Activated B cell treated with CpG ODN at 0.5 μM for 24 hours (primary cell): ENCODE measurements at regions of chr7 and their contacts with region 1.

Region 1: DNA sequence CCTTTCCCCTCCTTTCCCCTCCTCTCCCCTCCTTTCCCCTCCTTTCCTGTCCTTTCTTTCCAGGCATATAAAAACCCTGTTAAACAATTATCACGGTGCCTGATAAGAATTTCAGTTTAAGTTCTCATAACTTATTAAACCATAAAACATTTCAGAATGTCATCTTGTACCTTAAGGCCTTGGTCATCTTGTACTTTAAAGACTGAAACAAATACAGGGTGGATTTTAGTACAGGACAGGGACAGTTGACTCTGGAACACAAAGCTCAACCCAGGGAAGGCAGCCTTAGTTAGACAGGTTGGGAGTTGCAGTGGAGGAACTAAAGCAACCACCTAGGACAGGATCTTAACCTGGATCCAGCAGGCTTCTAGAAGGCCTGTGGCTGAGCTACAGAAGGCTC is 1.2 kb downstream of the AGR3 start:
- DNase-seq: no peak
- ATAC-seq: no peak
- H3K4me3 Mint-ChIP-seq: no peak overlapping the region
- H3K27ac Mint-ChIP-seq: no peak overlapping the region
- H3K4me1 Mint-ChIP-seq: peaks cover 2% of the 10 kb centered on the region
- H3K27me3 Mint-ChIP-seq: no peaks in the 10 kb centered on the region
- CTCF ChIP-seq: no peak

Region 2: DNA sequence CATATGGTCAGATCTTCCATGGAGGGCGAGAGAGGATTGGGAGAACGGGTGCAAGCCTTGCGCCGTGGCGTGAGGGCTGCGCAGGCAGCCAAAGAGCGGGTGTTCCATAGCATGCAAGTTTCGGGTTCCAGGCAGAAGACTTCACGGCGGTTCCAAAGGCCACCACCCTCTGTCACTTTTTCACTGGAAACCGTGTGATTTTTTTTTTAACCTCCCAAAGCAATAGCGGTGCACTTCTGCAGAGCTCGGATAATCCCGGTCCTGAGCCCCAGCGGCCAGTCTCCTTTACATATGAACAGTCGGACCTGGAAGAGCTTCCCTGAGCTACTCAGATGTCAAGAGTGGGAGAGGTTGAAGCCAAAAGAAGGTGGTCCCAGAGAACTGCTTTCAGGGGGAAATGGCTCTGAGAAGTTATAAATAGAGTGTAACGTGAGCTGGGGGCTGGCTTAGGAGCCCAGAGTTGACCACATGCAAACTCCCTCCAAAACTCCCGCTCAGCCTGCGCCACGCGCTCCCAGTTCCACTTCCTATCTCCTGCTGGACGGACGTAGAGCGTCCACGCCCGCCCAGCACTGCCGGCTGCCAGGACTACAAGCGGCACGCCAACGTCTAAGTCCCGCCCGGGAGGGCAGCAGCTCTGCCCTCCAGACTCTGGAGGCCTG is 1194.1 kb before region 1 on chr7 and contains the start of gene MEOX2:
- CTCF ChIA-PET with region 1: no interaction called
- POLR2A ChIA-PET with region 1: no interaction called
- intact Hi-C with region 1: no loop called
- DNase-seq: no peak
- ATAC-seq: no peak
- H3K4me3 Mint-ChIP-seq: no peak within 1 kb of the TSS
- H3K27ac Mint-ChIP-seq: no peak within 1 kb of the TSS
- H3K4me1 Mint-ChIP-seq: no peaks in the 10 kb centered on the region
- H3K27me3 Mint-ChIP-seq: peaks cover 30% of the 10 kb centered on the region
- CTCF ChIP-seq: no peak
- total RNA-seq, gene MEOX2: not detected in 2 replicates

Region 3: DNA sequence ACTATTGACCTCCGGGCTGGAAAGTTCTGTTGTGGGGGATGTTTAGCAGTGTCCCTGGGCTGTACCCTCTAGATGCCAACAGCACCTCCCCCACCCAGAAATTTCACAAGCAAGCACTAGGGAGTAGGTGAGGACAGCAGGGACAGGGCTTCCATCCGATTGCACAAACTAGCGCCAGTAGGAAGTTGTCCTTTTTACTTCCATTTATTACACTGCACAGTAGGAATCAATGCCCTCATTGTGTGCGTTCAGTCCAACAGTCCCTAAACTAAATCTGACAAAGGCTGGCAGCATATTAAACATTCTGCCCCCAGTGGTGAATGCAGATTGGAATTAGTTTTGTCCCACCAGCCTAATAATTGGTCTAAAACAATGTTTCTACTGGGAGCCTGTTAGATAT is 408.6 kb before region 1 on chr7:
- CTCF ChIA-PET with region 1: no interaction called
- POLR2A ChIA-PET with region 1: no interaction called
- intact Hi-C with region 1: no loop called
- DNase-seq: no peak
- ATAC-seq: no peak
- H3K4me3 Mint-ChIP-seq: no peak overlapping the region
- H3K27ac Mint-ChIP-seq: no peak overlapping the region
- H3K4me1 Mint-ChIP-seq: no peaks in the 10 kb centered on the region
- H3K27me3 Mint-ChIP-seq: peaks cover 9% of the 10 kb centered on the region
- CTCF ChIP-seq: no peak

Region 4: DNA sequence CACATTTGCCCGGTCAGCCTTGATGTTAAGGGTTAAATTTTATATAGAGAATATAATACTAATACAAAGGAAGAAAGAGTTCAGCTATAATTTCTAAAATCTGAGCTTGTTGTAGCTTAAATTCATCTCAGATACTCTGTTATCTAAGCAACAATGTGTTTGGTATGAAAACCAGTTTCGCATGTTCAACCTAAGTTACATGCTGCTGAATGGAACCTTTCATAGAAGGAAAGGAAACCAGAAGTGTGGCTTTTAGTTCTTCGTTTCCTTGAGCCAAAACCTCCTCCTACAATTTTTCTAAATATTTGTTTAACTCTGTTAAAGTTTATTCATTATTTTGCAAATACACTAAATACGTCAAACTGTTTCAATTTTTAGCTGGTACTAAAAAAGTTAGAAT is 94.3 kb before region 1 on chr7:
- CTCF ChIA-PET with region 1: no interaction called
- POLR2A ChIA-PET with region 1: interaction called, 17 read pairs
- intact Hi-C with region 1: no loop called
- DNase-seq: no peak
- ATAC-seq: no peak
- H3K4me3 Mint-ChIP-seq: no peak overlapping the region
- H3K27ac Mint-ChIP-seq: no peak overlapping the region
- H3K4me1 Mint-ChIP-seq: peaks cover 5% of the 10 kb centered on the region
- H3K27me3 Mint-ChIP-seq: no peaks in the 10 kb centered on the region
- CTCF ChIP-seq: no peak

Region 5: DNA sequence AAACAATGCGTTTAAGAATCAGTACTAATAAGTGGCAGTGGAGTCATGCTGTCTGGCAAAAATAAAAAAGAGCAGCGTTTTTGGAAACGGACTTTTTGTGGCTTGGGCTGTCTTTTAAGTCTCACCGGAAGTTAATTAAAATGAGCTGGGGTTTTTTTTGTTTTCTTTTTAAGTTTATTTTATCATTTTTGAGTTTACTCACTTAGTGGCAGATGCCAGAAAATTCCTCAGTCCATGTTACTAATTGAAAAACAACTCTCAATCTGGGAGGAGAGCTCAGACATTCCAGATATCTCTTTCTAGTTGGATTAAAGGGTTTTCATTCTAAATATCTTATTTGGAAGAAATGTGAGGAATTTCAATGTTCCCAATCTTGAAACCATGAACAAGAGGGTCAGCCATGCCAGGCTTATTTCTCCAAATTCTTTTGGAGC is 135.1 kb after region 1 on chr7:
- CTCF ChIA-PET with region 1: no interaction called
- POLR2A ChIA-PET with region 1: no interaction called
- intact Hi-C with region 1: no loop called
- DNase-seq: no peak
- ATAC-seq: no peak
- H3K4me3 Mint-ChIP-seq: no peak overlapping the region
- H3K27ac Mint-ChIP-seq: no peak overlapping the region
- H3K4me1 Mint-ChIP-seq: peaks cover 4% of the 10 kb centered on the region
- H3K27me3 Mint-ChIP-seq: no peaks in the 10 kb centered on the region
- CTCF ChIP-seq: no peak

Region 6: GRCh38 chr7:17063045-17063383 is 182.5 kb after region 1 on chr7:
- CTCF ChIA-PET with region 1: no interaction called
- POLR2A ChIA-PET with region 1: no interaction called
- intact Hi-C with region 1: no loop called
- DNase-seq: no peak
- ATAC-seq: no peak
- H3K4me3 Mint-ChIP-seq: no peak overlapping the region
- H3K27ac Mint-ChIP-seq: no peak overlapping the region
- H3K4me1 Mint-ChIP-seq: peaks cover 14% of the 10 kb centered on the region
- H3K27me3 Mint-ChIP-seq: no peaks in the 10 kb centered on the region
- CTCF ChIP-seq: no peak